HAP-1 (cell line): ENCODE measurements at regions of chr16 and their contacts with region 1.

Region 1: DNA sequence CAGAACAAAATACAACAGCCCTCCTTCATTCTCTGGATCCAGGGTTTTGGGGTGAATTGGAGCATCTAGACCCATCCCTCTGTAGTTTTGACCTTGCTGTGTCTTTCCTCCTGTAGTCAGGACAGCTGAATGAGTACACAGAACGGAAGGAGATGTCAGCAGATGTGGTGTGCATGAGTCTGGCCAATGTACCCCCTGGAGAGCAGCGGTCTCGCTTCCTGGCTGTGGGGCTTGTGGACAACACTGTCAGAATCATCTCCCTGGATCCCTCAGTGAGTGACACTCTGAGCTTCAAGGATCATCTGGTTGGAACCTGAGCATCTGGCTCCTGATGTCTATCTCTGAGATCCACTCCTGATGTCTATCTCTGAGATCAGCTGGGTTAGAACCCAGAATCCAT is 32.4 kb downstream of the SF3B3 start:
- DNase-seq: no peak
- H3K4me3 ChIP-seq: no peak overlapping the region
- H3K4me1 ChIP-seq: peaks cover 3% of the 10 kb centered on the region; the same call in 1 of the 2 replicates
- H3K27me3 ChIP-seq: no peaks in the 10 kb centered on the region

Region 2: GRCh38 chr16:70267516-70267915 is 288.5 kb before region 1 on chr16:
- in situ Hi-C with region 1: loop called (anchors 5 kb)
- DNase-seq: peak; percentile 49 to 67
- H3K4me3 ChIP-seq: no peak overlapping the region
- H3K4me1 ChIP-seq: no peaks in the 10 kb centered on the region
- H3K27me3 ChIP-seq: no peaks in the 10 kb centered on the region